Activated T-helper 2 cell treated with anti-CD3 and anti-CD28 coated beads, Interferon-gamma antibody, Interleukin-2, Interleukin-4, amounts not matched to agents 10 μg/mL and 5 μg/mL and 100 μg/mL, durations not matched to agents 14 hours and 24 hours and 36 hours (primary cell): ENCODE measurements at regions of chr6 and their contacts with region 1.

Region 1: DNA sequence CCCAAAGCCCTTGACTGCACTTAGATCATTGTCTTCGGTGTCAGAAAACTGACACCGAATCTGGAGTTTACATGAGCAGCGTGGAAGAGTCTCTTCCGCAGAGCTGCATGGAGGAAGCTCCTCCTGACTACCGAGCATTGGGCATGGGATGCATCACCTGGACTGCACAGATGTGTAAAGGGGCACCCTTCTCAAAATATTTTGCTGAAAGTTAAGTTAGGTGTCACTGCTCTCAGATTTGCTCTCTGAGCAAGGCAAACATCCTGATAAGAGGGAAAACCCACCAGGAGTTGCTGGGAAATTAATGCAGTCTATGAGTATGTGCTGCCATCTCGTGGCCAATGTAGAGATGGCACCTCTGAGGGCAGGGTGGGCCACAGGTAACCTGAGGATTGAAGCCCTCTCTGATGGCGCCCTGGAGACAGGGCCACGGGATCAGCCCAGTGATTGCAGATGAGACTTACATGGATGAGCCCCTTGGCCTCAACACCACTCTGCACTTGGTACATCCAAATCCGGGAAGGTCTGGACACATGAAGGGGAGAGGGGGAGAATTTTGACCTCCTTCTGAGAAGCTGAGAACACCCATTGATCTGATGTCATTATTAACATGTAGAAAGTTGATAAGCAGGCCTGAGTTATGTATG is 129.9 kb downstream of the LPA start:
- DNase-seq: peak; percentile 33
- H3K4me3 Mint-ChIP-seq: no peak overlapping the region
- H3K27ac Mint-ChIP-seq: no peak overlapping the region
- H3K4me1 Mint-ChIP-seq: no peaks in the 10 kb centered on the region
- H3K27me3 Mint-ChIP-seq: peaks cover 20% of the 10 kb centered on the region

Region 2: GRCh38 chr6:160137989-160138835 is 396.0 kb before region 1 on chr6:
- intact Hi-C with region 1: loop called (anchors 1 kb)
- DNase-seq: peak; percentile 58
- H3K4me3 Mint-ChIP-seq: no peak overlapping the region
- H3K27ac Mint-ChIP-seq: peak overlapping the region; percentile 32
- H3K4me1 Mint-ChIP-seq: peaks cover 7% of the 10 kb centered on the region
- H3K27me3 Mint-ChIP-seq: no peaks in the 10 kb centered on the region

Region 3: DNA sequence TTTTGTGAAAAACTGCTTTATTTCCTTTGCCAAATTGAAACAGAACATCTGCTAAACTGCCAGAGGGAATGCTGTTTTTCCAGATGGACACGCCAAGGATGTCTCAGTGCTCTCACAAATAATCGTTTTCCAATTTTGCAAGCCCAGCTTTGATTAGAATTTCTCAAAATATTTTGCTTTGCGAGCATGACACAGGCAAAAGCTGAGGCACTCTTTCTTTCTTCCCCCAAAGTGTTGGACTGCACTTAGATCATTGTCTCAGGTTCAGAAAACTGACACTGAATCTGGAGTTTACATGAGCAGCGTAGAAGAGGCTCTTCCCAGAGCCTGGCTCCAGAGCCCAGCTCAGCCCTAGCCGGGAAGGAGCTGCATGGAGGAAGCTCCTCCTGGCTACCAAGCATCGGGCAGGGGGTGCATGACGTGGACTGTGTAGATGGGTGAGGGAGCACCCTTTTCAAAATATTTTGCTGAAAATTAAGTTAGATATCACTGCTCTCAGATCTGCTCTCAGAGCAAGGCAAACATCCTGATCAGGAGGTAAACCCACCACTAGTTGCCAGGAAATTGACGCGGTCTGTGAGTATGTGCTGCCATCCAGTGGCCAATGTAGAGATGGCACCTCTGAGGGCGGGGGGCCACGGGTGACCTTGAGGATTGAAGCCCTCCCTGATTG is 78.5 kb before region 1 on chr6:
- intact Hi-C with region 1: loop called (anchors 1 kb)
- DNase-seq: peak; percentile 56
- H3K4me3 Mint-ChIP-seq: no peak overlapping the region
- H3K27ac Mint-ChIP-seq: no peak overlapping the region
- H3K4me1 Mint-ChIP-seq: peaks cover 25% of the 10 kb centered on the region
- H3K27me3 Mint-ChIP-seq: peaks cover 19% of the 10 kb centered on the region

Region 4: GRCh38 chr6:160520043-160520904 is 13.9 kb before region 1 on chr6:
- intact Hi-C with region 1: loop called (anchors 1 kb)
- DNase-seq: peak; percentile 64
- H3K4me3 Mint-ChIP-seq: peak overlapping the region; percentile 90
- H3K27ac Mint-ChIP-seq: peak overlapping the region; percentile 87
- H3K4me1 Mint-ChIP-seq: peaks cover 18% of the 10 kb centered on the region
- H3K27me3 Mint-ChIP-seq: peaks cover 48% of the 10 kb centered on the region

Region 5: GRCh38 chr6:160919723-160920440 is 385.7 kb after region 1 on chr6:
- intact Hi-C with region 1: no loop called
- DNase-seq: no peak
- H3K4me3 Mint-ChIP-seq: no peak overlapping the region
- H3K27ac Mint-ChIP-seq: no peak overlapping the region
- H3K4me1 Mint-ChIP-seq: no peaks in the 10 kb centered on the region
- H3K27me3 Mint-ChIP-seq: no peaks in the 10 kb centered on the region